ENCODE measurements at regions of chr2 and their contacts with region 1.

Region 1: GRCh38 chr2:18749912-18750526 is 160.7 kb upstream of the NT5C1B start:
- DNase-seq: peak; percentile 35
- H3K4me3 ChIP-seq: no peak overlapping the region
- H3K27ac ChIP-seq: peak overlapping the region in 1 of 2 experiments; percentile 19; a peak in 1 of 4 replicates
- H3K4me1 ChIP-seq: peaks cover 0 to 23% of the 10 kb centered on the region in 2 experiments; a peak in 2 of 4 replicates
- H3K27me3 ChIP-seq: no peaks in the 10 kb centered on the region
- CTCF ChIP-seq: peak; percentile 97
- EP300 ChIP-seq: no peak
- RAD21 ChIP-seq: peak; percentile 98

Region 2: GRCh38 chr2:18724371-18725145 is 25.5 kb before region 1 on chr2:
- CTCF ChIA-PET with region 1: interaction called, 14 read pairs
- POLR2A ChIA-PET with region 1: no interaction called
- DNase-seq: no peak
- H3K4me3 ChIP-seq: no peak overlapping the region
- H3K27ac ChIP-seq: no peak overlapping the region
- H3K4me1 ChIP-seq: peaks cover 0 to 28% of the 10 kb centered on the region in 2 experiments; a peak in 3 of 4 replicates
- H3K27me3 ChIP-seq: no peaks in the 10 kb centered on the region
- CTCF ChIP-seq: no peak
- EP300 ChIP-seq: 0 out of 4 replicates have a peak, but pooled peaks of 1 of the 2 experiments have one; percentile 29
- RAD21 ChIP-seq: no peak

Region 3: GRCh38 chr2:19362755-19363473 is 612.9 kb after region 1 on chr2:
- CTCF ChIA-PET with region 1: interaction called, 38 read pairs
- POLR2A ChIA-PET with region 1: no interaction called
- DNase-seq: peak; percentile 91
- H3K4me3 ChIP-seq: peak overlapping the region; percentile 66 to 76
- H3K27ac ChIP-seq: peak overlapping the region; percentile 52 to 59; a peak in 3 of 4 replicates
- H3K4me1 ChIP-seq: peaks cover 5 to 19% of the 10 kb centered on the region in 2 experiments; a peak in 1 of 4 replicates
- H3K27me3 ChIP-seq: no peaks in the 10 kb centered on the region
- CTCF ChIP-seq: peak; percentile 98
- EP300 ChIP-seq: peak; percentile 25 to 44; a peak in 1 of 4 replicates
- RAD21 ChIP-seq: peak; percentile 94

Measured in SK-N-SH (cell line).